ENCODE measurements at regions of chr10 and their contacts with region 1.

Region 1: GRCh38 chr10:11454958-11455566 is 156.4 kb downstream of the USP6NL start:
- DNase-seq: no peak
- ATAC-seq: peak; percentile 57
- H3K4me3 ChIP-seq: no peak overlapping the region
- H3K27ac ChIP-seq: no peak overlapping the region
- H3K4me1 ChIP-seq: peaks cover 12% of the 10 kb centered on the region
- H3K27me3 ChIP-seq: no peaks in the 10 kb centered on the region
- CTCF ChIP-seq: peak in 2 of 3 experiments; percentile 12 to 25; a peak in 2 of 6 replicates
- EP300 ChIP-seq: no peak
- POLR2A ChIP-seq: no peak
- RAD21 ChIP-seq: peak; percentile 34; the same call in 1 of the 2 replicates

Region 2: DNA sequence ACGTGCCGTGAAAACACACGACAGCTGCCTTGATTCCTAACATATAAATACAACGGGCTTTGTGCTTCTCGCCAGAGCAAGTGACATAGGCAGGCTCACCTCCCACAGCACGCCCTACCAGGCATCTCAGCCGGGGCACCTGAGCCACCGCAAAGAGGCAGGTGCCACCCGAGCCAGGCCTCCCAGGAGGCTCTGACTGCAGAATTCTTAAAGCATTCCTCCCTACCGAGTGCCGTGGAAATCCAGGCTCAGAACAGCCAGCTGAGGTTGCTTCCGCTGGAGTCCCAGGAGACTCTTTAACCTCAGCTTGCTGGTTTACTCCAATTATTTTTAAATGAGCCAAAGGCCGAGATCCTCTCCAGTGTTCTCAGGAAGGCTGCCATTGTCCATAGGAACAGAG is 50.2 kb before region 1 on chr10:
- CTCF ChIA-PET with region 1: no interaction called
- POLR2A ChIA-PET with region 1: no interaction called
- RAD21 ChIA-PET with region 1: no interaction called
- SMC1A ChIA-PET with region 1: no interaction called
- in situ Hi-C with region 1: no loop called
- intact Hi-C with region 1: no loop called
- DNase-seq: no peak
- ATAC-seq: no peak
- H3K4me3 ChIP-seq: no peak overlapping the region
- H3K27ac ChIP-seq: no peak overlapping the region
- H3K4me1 ChIP-seq: no peaks in the 10 kb centered on the region; the same call in 1 of the 2 replicates
- H3K27me3 ChIP-seq: no peaks in the 10 kb centered on the region
- CTCF ChIP-seq: no peak
- EP300 ChIP-seq: no peak
- POLR2A ChIP-seq: no peak
- RAD21 ChIP-seq: no peak

Region 3: DNA sequence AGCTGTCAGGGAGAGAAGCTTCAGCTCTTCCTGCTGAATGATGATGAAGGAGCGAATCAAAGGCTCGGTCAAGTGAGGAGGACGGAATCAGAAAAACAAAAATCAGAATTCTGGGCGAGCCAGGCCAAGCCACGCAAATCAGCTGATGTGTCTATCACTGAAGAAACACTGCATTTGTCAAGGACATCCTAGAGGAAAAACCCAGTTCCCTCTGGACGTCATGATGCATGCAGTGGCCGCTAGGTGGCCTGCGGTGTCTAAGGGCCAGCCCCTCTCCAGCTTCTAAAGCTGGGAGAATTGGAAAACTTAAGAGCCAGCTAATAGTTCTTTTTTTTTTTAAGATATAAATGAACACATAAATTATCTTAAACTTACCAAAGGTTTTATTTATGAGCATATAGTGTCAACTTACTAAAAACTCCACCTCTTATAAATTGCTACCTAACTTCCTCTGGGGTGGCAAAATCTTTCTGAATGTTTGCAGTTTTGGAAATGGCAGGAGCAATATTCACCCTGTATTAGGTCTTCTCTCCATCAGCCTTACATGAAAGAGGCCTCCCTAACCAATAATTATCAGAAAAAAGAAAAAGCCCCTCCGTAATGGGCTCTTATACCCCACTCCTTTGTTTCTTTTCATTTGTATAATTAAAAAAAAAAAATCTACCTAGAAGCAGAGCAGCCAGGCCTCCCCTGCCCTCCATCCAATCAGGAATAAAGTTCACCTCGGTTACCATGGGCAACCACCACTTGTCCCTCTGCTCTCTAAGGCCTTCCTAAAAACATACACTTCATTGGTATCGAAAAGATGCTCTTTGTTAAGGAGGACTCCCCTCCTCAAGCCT is 30.4 kb before region 1 on chr10:
- CTCF ChIA-PET with region 1: interaction called, 11 read pairs
- POLR2A ChIA-PET with region 1: no interaction called
- RAD21 ChIA-PET with region 1: no interaction called
- SMC1A ChIA-PET with region 1: interaction called, 3 read pairs
- in situ Hi-C with region 1: no loop called
- intact Hi-C with region 1: no loop called
- DNase-seq: no peak
- ATAC-seq: peak; percentile 91
- H3K4me3 ChIP-seq: no peak overlapping the region
- H3K27ac ChIP-seq: no peak overlapping the region
- H3K4me1 ChIP-seq: no peaks in the 10 kb centered on the region
- H3K27me3 ChIP-seq: no peaks in the 10 kb centered on the region; a peak in 1 of 4 replicates
- CTCF ChIP-seq: peak; percentile 79 to 91 (median 89)
- EP300 ChIP-seq: no peak
- POLR2A ChIP-seq: no peak
- RAD21 ChIP-seq: peak; percentile 79

Measured in GM12878 (cell line).